Testis (tissue), 5 donors: ENCODE measurements at regions of chr16 and their contacts with region 1.

Region 1: GRCh38 chr16:67659648-67660563 is at the start of gene ACD:
- DNase-seq: peak; percentile 92
- H3K4me3 ChIP-seq: peak within 1 kb of the TSS; percentile 69 to 96
- H3K27ac ChIP-seq: peak within 1 kb of the TSS; percentile 96
- H3K4me1 ChIP-seq: peaks cover 8% of the 10 kb centered on the region
- H3K27me3 ChIP-seq: no peaks in the 10 kb centered on the region
- CTCF ChIP-seq: no peak
- POLR2A ChIP-seq: peak; percentile 58
- total RNA-seq, gene ACD: 44.7 to 48.3 TPM

Region 2: GRCh38 chr16:67571981-67572431 is 87.9 kb before region 1 on chr16:
- intact Hi-C with region 1: loop called (anchors 5 kb)
- DNase-seq: no peak
- H3K4me3 ChIP-seq: no peak overlapping the region
- H3K27ac ChIP-seq: no peak overlapping the region
- H3K4me1 ChIP-seq: no peaks in the 10 kb centered on the region
- H3K27me3 ChIP-seq: no peaks in the 10 kb centered on the region
- CTCF ChIP-seq: no peak
- POLR2A ChIP-seq: no peak

Region 3: GRCh38 chr16:67613808-67614207 is 46.1 kb before region 1 on chr16:
- intact Hi-C with region 1: no loop called
- DNase-seq: peak; percentile 5
- H3K4me3 ChIP-seq: no peak overlapping the region
- H3K27ac ChIP-seq: no peak overlapping the region
- H3K4me1 ChIP-seq: no peaks in the 10 kb centered on the region
- H3K27me3 ChIP-seq: no peaks in the 10 kb centered on the region
- CTCF ChIP-seq: no peak
- POLR2A ChIP-seq: no peak

Region 4: DNA sequence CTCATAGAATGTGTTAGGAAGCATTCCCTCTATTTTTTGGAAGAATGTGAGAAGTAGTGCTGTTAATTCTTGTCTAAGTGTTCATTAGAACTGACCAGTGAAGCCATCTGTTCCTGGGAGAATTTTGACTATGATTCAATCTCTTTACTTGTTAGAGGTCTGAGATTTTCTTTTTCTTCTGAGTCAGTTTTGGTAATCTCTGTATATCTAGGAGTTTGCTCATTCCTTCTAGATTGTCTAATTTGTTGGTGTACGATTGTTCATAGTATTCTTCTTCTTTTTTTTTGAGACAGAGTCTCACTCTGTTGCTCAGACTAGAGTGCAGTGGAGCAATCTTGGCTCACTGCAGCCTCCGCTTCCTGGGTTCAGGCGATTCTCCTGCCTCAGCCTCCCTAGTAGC is 445.7 kb after region 1 on chr16:
- intact Hi-C with region 1: no loop called
- DNase-seq: no peak
- H3K4me3 ChIP-seq: no peak overlapping the region
- H3K27ac ChIP-seq: no peak overlapping the region
- H3K4me1 ChIP-seq: no peaks in the 10 kb centered on the region
- H3K27me3 ChIP-seq: no peaks in the 10 kb centered on the region
- CTCF ChIP-seq: no peak
- POLR2A ChIP-seq: no peak